T-cell (primary cell): ENCODE measurements at regions of chr12 and their contacts with region 1.

Region 1: DNA sequence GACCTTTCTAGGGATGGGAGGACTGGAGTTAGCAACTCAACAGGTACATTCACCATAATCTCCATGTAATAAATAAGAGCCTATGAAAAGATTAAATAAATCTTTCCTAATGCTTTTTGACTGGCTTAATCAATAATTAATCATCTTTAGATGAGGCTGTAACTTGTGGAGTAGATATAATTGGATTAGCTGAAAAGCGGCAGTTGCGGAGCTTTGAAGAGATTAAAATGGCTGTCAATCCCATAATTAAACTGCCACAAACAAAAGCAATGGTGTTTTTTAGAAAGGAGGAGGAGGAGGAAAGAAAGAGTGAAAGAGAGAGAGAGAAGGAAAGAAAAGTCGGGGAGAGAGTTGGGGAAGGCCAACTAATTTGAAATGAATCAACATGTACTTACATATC is 70.7 kb upstream of the TMEM263 start:
- DNase-seq: no peak
- ATAC-seq: no peak
- H3K4me3 ChIP-seq: no peak overlapping the region
- H3K4me3 Mint-ChIP-seq: no peak overlapping the region
- H3K27ac ChIP-seq: no peak overlapping the region
- H3K27ac Mint-ChIP-seq: no peak overlapping the region
- H3K4me1 ChIP-seq: no peaks in the 10 kb centered on the region
- H3K4me1 Mint-ChIP-seq: no peaks in the 10 kb centered on the region
- H3K27me3 ChIP-seq: no peaks in the 10 kb centered on the region
- H3K27me3 Mint-ChIP-seq: no peaks in the 10 kb centered on the region

Region 2: GRCh38 chr12:106436164-106436563 is 448.9 kb before region 1 on chr12:
- CTCF ChIA-PET with region 1: no interaction called
- POLR2A ChIA-PET with region 1: interaction called in 1 of 2 experiments, 10 read pairs
- DNase-seq: no peak
- ATAC-seq: no peak
- H3K4me3 ChIP-seq: no peak overlapping the region
- H3K4me3 Mint-ChIP-seq: no peak overlapping the region
- H3K27ac ChIP-seq: no peak overlapping the region
- H3K27ac Mint-ChIP-seq: no peak overlapping the region
- H3K4me1 ChIP-seq: no peaks in the 10 kb centered on the region
- H3K4me1 Mint-ChIP-seq: no peaks in the 10 kb centered on the region
- H3K27me3 ChIP-seq: no peaks in the 10 kb centered on the region
- H3K27me3 Mint-ChIP-seq: no peaks in the 10 kb centered on the region

Region 3: DNA sequence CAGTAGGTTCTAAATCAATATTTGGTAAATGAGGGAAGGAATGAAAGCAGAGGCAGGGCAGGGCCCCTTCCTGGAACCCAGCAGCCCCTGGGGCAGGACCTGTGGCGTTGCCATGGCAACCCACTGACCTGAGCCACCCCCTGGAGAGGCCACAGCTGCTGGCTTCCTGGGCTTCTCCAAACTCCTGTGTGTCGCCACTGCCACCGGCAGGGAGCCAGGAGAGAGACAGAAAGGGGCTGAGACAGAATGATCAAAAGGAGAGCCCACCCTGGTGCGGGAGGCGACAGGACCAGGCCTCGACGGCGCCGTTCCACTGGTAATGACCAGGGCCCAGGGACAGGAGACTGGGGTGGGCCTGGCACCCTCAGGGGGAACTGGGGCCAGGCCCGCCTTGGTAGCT is 284.0 kb before region 1 on chr12:
- CTCF ChIA-PET with region 1: no interaction called
- POLR2A ChIA-PET with region 1: no interaction called
- DNase-seq: no peak
- ATAC-seq: no peak
- H3K4me3 ChIP-seq: no peak overlapping the region
- H3K4me3 Mint-ChIP-seq: no peak overlapping the region
- H3K27ac ChIP-seq: no peak overlapping the region
- H3K27ac Mint-ChIP-seq: no peak overlapping the region
- H3K4me1 ChIP-seq: no peaks in the 10 kb centered on the region
- H3K4me1 Mint-ChIP-seq: no peaks in the 10 kb centered on the region
- H3K27me3 ChIP-seq: peaks cover 0 to 5% of the 10 kb centered on the region in 2 experiments
- H3K27me3 Mint-ChIP-seq: peaks cover 18 to 20% of the 10 kb centered on the region in 2 donors